Breast epithelium (tissue), 4 donors: ENCODE measurements at regions of chrX and their contacts with region 1.

Region 1: DNA sequence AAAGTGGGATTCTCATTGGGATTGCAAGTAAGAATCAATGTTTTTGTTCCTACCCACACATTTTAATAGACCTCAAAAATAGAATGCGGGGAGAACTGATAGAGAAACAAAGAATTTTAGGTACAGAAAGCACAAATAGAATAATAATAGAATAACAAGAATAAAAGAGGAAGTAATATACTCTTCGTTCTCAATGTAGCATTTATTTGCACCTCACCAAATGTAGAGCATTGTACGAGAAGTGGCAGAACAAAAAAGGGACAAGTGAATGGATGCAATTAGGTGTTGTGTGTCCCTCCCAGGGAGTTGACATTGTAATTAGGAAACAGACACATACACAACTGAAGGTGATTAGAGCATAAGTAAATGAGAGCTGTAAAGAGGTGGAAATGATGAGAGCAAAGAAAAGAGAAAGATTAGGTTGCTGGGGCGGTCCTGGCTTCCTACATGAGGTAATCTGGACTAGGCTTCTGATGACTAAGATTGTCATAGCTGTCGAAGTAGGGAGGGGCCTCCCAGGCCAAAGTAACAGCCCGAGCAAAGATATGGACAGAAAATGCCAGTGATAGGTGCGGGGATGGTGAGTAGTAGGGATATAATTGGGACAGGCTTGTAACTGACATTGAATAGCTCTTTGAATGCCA is 10.4 kb downstream of the RAB9A start:
- DNase-seq: no peak
- H3K4me3 ChIP-seq: no peak overlapping the region
- H3K27ac ChIP-seq: peak overlapping the region in 1 of 2 donors; percentile 10
- H3K4me1 ChIP-seq: no peaks in the 10 kb centered on the region
- H3K27me3 ChIP-seq: peaks cover 0 to 40% of the 10 kb centered on the region in 2 donors
- CTCF ChIP-seq: no peak
- POLR2A ChIP-seq: no peak

Region 2: DNA sequence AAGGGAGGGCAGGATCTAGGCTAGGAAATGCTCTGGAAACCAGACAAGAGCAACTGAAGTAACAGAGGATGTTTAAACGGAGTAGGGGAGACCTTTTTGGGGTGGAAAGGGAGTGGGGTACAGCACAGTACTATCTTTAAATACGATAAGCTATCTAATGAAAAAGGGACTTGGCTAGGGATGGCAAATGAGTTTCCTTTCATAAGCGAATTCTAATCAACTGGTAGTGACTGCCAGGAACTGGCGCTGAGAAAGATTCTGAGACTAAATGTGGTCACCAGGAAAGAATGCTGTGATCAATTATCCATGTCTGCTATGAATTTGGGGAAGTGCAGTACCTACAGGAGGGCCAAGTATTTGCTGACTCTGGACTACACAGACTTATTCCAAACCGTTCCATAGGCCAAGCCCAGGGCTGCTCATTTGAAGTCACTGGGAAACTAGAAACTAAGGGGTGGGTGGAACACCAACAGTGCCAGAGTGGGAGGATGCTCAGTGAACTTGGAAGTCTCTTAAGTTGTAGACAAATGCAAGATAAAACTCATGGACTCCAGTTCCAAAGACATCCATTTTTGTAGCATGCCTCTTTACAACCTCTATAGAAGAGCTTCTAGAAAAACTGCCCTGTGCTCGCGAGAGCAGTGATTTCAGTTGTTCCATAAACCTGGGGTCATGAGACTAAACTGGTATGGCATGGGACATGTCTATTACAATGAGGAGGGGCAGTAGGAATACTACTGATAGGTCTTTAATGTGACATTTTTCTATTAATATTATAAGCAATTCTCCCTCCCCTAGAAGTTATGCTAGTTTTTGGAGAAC is 33.2 kb after region 1 on chrX:
- intact Hi-C with region 1: loop called (anchors 1 kb)
- DNase-seq: no peak
- H3K4me3 ChIP-seq: no peak overlapping the region
- H3K27ac ChIP-seq: peak overlapping the region; percentile 31 to 92
- H3K4me1 ChIP-seq: no peaks in the 10 kb centered on the region
- H3K27me3 ChIP-seq: no peaks in the 10 kb centered on the region
- CTCF ChIP-seq: no peak
- POLR2A ChIP-seq: no peak